ENCODE measurements at regions of chr4 and their contacts with region 1.

Region 1: GRCh38 chr4:142353149-142353738 is 492.9 kb downstream of the INPP4B start:
- DNase-seq: no peak
- H3K4me3 ChIP-seq: no peak overlapping the region
- H3K27ac ChIP-seq: no peak overlapping the region
- H3K4me1 ChIP-seq: no peaks in the 10 kb centered on the region
- H3K27me3 ChIP-seq: no peaks in the 10 kb centered on the region
- CTCF ChIP-seq: peak; percentile 52 to 75 (median 59)
- POLR2A ChIP-seq: no peak

Region 2: GRCh38 chr4:140870427-140870826 is 1482.8 kb before region 1 on chr4:
- intact Hi-C with region 1: loop called (anchors 5 kb)
- DNase-seq: no peak
- H3K4me3 ChIP-seq: no peak overlapping the region
- H3K27ac ChIP-seq: no peak overlapping the region
- H3K4me1 ChIP-seq: no peaks in the 10 kb centered on the region
- H3K27me3 ChIP-seq: no peaks in the 10 kb centered on the region
- CTCF ChIP-seq: no peak
- POLR2A ChIP-seq: no peak

Region 3: DNA sequence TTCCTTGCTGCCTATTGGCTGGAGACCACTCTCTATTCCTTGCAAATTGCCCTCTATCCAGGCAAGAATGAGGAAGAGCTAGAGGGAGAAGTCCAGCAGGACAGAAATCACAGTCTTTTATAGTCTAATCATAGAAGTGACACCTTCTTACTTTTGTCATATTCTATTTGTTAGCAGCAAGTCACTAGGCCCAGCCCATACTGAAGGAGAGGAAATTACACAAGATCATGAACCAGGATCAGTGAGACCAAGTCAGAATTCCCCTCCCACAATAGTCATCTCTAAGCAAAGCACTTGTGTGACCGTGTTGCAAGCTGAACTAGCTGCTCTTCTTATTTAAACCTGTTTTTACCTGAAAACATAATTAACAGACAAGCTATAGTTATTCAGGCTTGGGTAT is 175.2 kb after region 1 on chr4:
- intact Hi-C with region 1: loop called (anchors 5 kb)
- DNase-seq: no peak
- H3K4me3 ChIP-seq: no peak overlapping the region
- H3K27ac ChIP-seq: no peak overlapping the region
- H3K4me1 ChIP-seq: no peaks in the 10 kb centered on the region
- H3K27me3 ChIP-seq: no peaks in the 10 kb centered on the region
- CTCF ChIP-seq: no peak
- POLR2A ChIP-seq: no peak

Measured in breast epithelium (tissue), 4 donors.